ENCODE measurements at regions of chr20 and their contacts with region 1.

Region 1: GRCh38 chr20:40689943-40690835 is 1.2 kb upstream of the MAFB start:
- DNase-seq: peak; percentile 98

Region 2: GRCh38 chr20:39264506-39265172 is 1425.5 kb before region 1 on chr20:
- intact Hi-C with region 1: loop called in 1 of 2 experiments (anchors 5 kb)
- DNase-seq: peak; percentile 85

Region 3: DNA sequence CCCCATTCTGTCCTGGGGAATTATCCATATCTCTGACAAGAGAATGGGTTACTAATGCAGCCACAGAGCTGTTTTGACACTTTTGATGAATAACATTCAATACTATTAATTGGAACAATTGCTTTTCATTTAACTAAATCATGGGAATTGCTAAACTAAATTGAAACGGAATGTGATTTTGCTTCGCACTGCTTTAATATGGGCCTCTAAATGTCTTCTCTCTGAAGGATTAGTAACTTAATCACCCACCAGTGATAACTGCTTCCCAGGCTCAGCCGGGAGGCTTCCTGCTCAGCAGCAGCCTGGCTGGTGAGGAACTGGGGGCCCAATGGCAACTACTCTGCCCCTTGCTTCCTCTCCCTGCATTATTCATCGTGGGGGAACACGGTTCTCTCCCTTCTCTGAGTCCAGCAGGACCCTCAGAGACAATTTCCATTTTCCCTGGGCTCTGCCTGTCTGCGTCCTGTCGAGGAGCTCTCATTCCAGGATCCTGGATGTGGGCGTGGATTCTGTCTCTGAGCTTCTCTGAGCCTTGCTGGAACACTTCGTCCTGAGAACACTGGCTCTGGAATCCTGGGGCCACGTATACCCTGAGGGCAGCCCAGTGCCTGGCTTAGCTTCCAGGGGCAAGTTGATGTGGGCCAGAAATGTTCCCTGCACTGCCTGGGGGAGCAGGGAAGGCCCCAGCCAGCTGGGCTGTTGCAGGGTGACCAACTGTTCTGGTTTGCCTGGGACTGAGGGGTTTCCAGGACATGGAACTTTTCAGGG is 1419.2 kb before region 1 on chr20:
- intact Hi-C with region 1: loop called (anchors 5 to 10 kb)
- DNase-seq: no peak

Region 4: GRCh38 chr20:39885975-39886649 is 804.1 kb before region 1 on chr20:
- intact Hi-C with region 1: loop called (anchors 10 kb)
- DNase-seq: peak; percentile 92

Region 5: GRCh38 chr20:39892983-39893685 is 797.1 kb before region 1 on chr20:
- intact Hi-C with region 1: loop called (anchors 10 kb)
- DNase-seq: no peak

Region 6: DNA sequence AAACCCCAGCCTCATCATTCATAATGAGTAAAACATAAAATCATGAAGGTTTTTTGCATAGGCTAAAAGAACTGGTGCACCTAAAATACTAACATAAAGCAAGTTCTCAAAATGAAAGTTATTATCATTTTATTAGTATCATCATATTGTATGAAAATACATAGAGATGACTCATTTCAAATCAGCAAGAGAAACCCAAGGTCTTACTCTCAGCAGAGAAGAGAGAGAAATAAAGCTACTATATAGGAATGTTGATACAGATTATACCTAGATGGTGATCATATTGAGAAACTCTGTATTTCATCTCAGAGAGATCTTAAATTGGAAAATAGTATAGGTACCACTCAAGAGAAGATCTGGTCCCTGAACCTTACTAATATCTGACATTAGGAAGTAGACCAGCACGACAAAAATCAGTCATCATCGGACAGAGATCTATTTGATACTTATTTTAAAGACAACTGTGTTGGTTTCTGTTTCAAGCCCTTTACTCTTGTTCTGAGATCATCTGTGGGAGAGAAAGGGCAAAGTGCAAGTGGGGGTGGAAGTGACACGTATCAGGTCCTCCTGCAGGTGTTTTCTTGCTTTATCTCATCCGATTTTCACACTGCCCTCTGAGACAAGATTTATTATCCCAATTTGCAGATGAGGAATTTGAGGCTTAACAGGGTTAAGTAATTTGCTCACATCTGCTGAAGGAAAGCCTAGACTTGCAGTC is 533.4 kb before region 1 on chr20:
- intact Hi-C with region 1: loop called in 1 of 2 experiments (anchors 10 kb)
- DNase-seq: no peak

Region 7: GRCh38 chr20:40606660-40607059 is 83.5 kb before region 1 on chr20:
- intact Hi-C with region 1: no loop called
- DNase-seq: no peak

Region 8: DNA sequence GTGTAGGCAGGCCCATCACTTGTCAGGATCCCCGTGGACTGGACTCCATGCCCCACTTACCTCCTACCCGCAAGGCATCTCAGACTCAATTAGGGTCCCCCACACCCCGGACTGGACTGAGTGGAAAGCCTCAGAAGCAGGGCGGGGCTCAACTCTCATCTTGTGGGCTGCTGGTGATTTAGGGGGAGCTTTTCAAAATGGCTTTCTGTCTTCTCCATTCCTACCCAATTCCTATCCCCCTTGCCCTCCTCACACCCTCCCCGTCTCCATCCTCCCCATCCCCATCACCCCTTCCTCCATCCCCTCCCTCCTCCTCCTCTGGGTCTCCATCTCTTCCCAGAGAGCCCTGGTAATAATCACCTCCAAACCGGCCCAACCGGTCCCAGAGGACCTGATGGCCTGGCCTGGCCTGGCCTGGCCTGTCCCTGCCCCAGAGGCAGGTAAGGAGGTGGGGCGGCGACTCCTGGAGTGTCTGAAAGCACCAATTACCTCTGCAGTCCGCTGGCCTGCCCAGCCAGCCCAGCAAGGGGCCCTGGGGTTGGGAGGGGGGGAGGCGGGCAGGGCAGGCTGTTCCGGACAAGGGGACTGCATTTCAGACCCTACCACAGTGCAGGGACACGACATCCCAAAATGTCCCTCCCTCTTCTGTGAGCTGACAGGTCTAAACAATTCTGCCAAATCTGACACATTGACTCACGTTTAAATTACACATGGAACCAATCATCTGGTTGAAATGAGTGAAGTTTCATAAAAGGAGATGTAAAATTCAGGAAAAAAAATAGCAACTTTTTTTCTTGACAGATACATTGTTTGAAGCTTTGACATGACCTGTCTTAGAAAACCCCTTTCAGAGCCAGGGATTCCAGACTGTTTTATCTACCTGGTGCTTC is 26.0 kb before region 1 on chr20:
- intact Hi-C with region 1: no loop called
- DNase-seq: no peak

Measured in posterior vena cava (tissue), 2 donors.